Tibial artery (tissue), 4 donors: ENCODE measurements at regions of chr7 and their contacts with region 1.

Region 1: DNA sequence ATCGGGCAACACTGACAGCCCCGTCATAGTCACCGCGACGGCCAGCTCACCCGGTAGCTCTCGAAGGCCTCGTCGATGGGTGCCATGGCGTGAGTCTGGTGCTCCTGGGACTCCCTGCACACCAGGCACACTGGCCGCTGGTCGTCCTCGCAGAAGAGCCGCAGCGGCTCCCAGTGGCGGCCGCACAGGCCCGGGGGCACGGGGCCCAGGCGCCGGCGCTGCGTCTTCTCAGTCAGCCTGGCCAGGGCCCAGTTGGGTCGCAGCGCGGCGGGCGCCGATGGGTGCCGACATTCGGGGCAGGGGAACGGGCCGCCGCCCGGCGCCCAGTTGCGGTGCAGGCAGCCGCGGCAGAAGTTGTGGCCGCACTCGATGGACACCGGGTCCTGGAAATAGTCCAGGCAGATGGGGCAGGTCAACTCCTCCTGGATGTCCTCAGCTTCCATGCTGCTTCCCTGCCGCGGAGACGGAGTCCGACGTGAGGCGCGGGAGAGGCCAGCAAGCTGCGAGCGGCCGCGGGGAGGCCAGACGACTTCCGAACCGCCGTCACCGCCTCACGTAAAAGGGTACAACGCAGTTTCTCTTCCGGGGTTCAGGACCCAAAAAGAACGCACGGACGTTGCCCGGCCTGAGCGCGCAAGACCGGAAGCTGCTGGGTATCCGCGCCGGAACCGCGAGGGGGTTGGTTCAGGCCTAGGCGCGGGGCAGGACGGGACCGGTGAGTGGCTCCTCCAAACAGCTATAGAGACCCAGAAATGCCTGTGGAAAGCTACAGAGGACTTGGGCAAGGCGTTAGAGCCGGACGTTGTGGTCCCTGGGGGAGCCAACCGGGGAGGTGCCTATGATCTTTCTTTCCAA is at the start of gene TRIM4:
- DNase-seq: peak; percentile 90 to 96
- H3K4me3 ChIP-seq: peak within 1 kb of the TSS; percentile 74 to 78
- H3K27ac ChIP-seq: peak within 1 kb of the TSS; percentile 88 to 91
- H3K4me1 ChIP-seq: peaks cover 0 to 47% (median 35%) of the 10 kb centered on the region in 4 donors
- H3K27me3 ChIP-seq: no peaks in the 10 kb centered on the region
- CTCF ChIP-seq: peak in 1 of 2 experiments; percentile 19

Region 2: GRCh38 chr7:99953649-99954048 is 34.5 kb after region 1 on chr7:
- intact Hi-C with region 1: no loop called
- DNase-seq: peak in 1 of 2 donors; percentile 68
- H3K4me3 ChIP-seq: no peak overlapping the region
- H3K27ac ChIP-seq: no peak overlapping the region
- H3K4me1 ChIP-seq: no peaks in the 10 kb centered on the region
- H3K27me3 ChIP-seq: no peaks in the 10 kb centered on the region
- CTCF ChIP-seq: no peak

Region 3: GRCh38 chr7:99997545-99998137 is 78.5 kb after region 1 on chr7:
- intact Hi-C with region 1: loop called (anchors 10 kb)
- DNase-seq: peak; percentile 23 to 68
- H3K4me3 ChIP-seq: peak overlapping the region; percentile 54 to 60
- H3K27ac ChIP-seq: peak overlapping the region; percentile 48 to 68
- H3K4me1 ChIP-seq: peaks cover 0 to 11% (median 5%) of the 10 kb centered on the region in 4 donors
- H3K27me3 ChIP-seq: peaks cover 0 to under 1% of the 10 kb centered on the region in 2 donors
- CTCF ChIP-seq: peak in 1 of 2 experiments; percentile 10

Region 4: GRCh38 chr7:100148559-100149350 is 229.6 kb after region 1 on chr7 and contains the start of gene LAMTOR4:
- intact Hi-C with region 1: loop called (anchors 10 kb)
- DNase-seq: peak; percentile 100
- H3K4me3 ChIP-seq: peak within 1 kb of the TSS; percentile 88 to 91
- H3K27ac ChIP-seq: peak within 1 kb of the TSS; percentile 89 to 91
- H3K4me1 ChIP-seq: peaks cover 4 to 17% (median 13%) of the 10 kb centered on the region in 4 donors
- H3K27me3 ChIP-seq: no peaks in the 10 kb centered on the region
- CTCF ChIP-seq: peak in 1 of 2 experiments; percentile 15